ENCODE measurements at regions of chr2 and their contacts with region 1.

Region 1: GRCh38 chr2:70070541-70071268 is 16.6 kb upstream of the PCBP1 start:
- DNase-seq: peak in 34 of 35 experiments; percentile 24 to 87 (median 48)
- ATAC-seq: peak; percentile 49 to 80 (median 78)
- H3K4me3 ChIP-seq: peak overlapping the region; percentile 23 to 26
- H3K4me3 Mint-ChIP-seq: peak overlapping the region; percentile 56 to 72 (median 71)
- H3K27ac ChIP-seq: peak overlapping the region; percentile 95
- H3K27ac Mint-ChIP-seq: peak overlapping the region; percentile 95 to 97
- H3K4me1 ChIP-seq: peaks cover 24 to 45% of the 10 kb centered on the region in 2 experiments
- H3K4me1 Mint-ChIP-seq: peaks cover 44 to 61% (median 59%) of the 10 kb centered on the region in 3 donors
- H3K27me3 ChIP-seq: no peaks in the 10 kb centered on the region
- H3K27me3 Mint-ChIP-seq: no peaks in the 10 kb centered on the region

Region 2: GRCh38 chr2:69717861-69718273 is 352.8 kb before region 1 on chr2:
- CTCF ChIA-PET with region 1: no interaction called
- POLR2A ChIA-PET with region 1: interaction called in 1 of 2 experiments, 10 read pairs
- DNase-seq: no peak
- ATAC-seq: no peak
- H3K4me3 ChIP-seq: no peak overlapping the region
- H3K4me3 Mint-ChIP-seq: no peak overlapping the region
- H3K27ac ChIP-seq: no peak overlapping the region
- H3K27ac Mint-ChIP-seq: no peak overlapping the region
- H3K4me1 ChIP-seq: peaks cover 0 to 15% of the 10 kb centered on the region in 2 experiments
- H3K4me1 Mint-ChIP-seq: peaks cover 10 to 19% (median 14%) of the 10 kb centered on the region in 3 donors
- H3K27me3 ChIP-seq: no peaks in the 10 kb centered on the region
- H3K27me3 Mint-ChIP-seq: no peaks in the 10 kb centered on the region

Region 3: GRCh38 chr2:69848201-69848770 is 222.4 kb before region 1 on chr2:
- CTCF ChIA-PET with region 1: no interaction called
- POLR2A ChIA-PET with region 1: no interaction called
- DNase-seq: no peak
- ATAC-seq: no peak
- H3K4me3 ChIP-seq: no peak overlapping the region
- H3K4me3 Mint-ChIP-seq: no peak overlapping the region
- H3K27ac ChIP-seq: no peak overlapping the region
- H3K27ac Mint-ChIP-seq: no peak overlapping the region
- H3K4me1 ChIP-seq: no peaks in the 10 kb centered on the region
- H3K4me1 Mint-ChIP-seq: no peaks in the 10 kb centered on the region
- H3K27me3 ChIP-seq: no peaks in the 10 kb centered on the region
- H3K27me3 Mint-ChIP-seq: no peaks in the 10 kb centered on the region

Region 4: DNA sequence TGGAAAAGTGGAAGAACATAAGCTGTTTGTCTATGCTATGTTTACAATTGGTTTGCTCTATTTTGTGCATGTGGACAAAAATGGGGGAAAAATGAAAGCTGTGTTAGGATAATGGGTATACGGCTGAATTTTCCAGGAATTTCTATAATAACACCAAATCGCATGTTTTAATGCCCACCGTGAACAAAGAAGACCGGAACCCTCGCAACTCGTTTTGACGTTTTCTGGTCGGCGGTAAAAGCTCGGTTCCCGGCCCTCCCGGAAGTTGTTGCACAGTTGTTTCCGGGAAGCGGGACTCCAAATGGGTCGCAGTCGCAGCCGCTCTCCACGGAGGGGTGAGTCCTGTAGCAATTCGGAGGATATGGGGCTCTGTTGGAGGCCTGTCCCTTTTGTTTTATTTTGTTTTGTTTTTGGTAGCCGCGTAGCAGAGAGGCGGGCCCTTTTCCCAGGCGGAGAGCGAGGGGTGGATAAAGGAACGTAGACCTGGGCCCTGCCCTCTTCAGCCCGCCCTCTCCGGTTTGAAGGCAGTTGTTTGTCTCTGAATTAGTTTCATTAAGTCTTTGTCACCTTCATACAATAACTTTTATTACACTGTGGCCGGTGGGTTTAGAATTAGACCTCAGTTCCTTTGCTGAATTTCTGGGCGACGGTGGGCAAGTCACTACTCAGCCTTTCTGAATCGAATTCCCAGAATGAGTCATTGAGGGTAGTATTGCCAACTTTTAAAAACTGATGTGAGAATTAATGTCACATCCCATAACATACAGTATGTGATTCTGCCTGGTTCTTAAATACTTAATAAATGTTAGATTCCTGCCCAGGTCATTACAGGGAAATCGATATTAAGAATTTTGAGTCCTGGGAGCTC is 176.8 kb before region 1 on chr2 and contains the start of gene SNRNP27:
- CTCF ChIA-PET with region 1: interaction called in 1 of 2 experiments, 6 read pairs
- POLR2A ChIA-PET with region 1: interaction called in 1 of 2 experiments, 20 read pairs
- DNase-seq: peak; percentile 65 to 87 (median 79)
- ATAC-seq: peak; percentile 93 to 96 (median 94)
- H3K4me3 ChIP-seq: peak within 1 kb of the TSS; percentile 73 to 93
- H3K4me3 Mint-ChIP-seq: peak within 1 kb of the TSS; percentile 86 to 100 (median 99)
- H3K27ac ChIP-seq: peak within 1 kb of the TSS; percentile 65
- H3K27ac Mint-ChIP-seq: peak within 1 kb of the TSS; percentile 97 to 99
- H3K4me1 ChIP-seq: peaks cover 13 to 19% of the 10 kb centered on the region in 2 experiments
- H3K4me1 Mint-ChIP-seq: peaks cover 45 to 50% (median 46%) of the 10 kb centered on the region in 3 donors
- H3K27me3 ChIP-seq: no peaks in the 10 kb centered on the region
- H3K27me3 Mint-ChIP-seq: no peaks in the 10 kb centered on the region
- total RNA-seq, gene SNRNP27: 38.3 to 51.1 (median 42.0) TPM

Region 5: GRCh38 chr2:69997015-69997830 is 73.5 kb before region 1 on chr2:
- CTCF ChIA-PET with region 1: interaction called in 1 of 2 experiments, 10 read pairs
- POLR2A ChIA-PET with region 1: interaction called in 1 of 2 experiments, 5 read pairs
- DNase-seq: peak in 1 of 35 experiments; percentile 14
- ATAC-seq: peak in 1 of 4 experiments; percentile 31
- H3K4me3 ChIP-seq: no peak overlapping the region
- H3K4me3 Mint-ChIP-seq: no peak overlapping the region
- H3K27ac ChIP-seq: no peak overlapping the region
- H3K27ac Mint-ChIP-seq: no peak overlapping the region
- H3K4me1 ChIP-seq: peaks cover 0 to 3% of the 10 kb centered on the region in 2 experiments
- H3K4me1 Mint-ChIP-seq: peaks cover 3 to 6% (median 5%) of the 10 kb centered on the region in 3 donors
- H3K27me3 ChIP-seq: no peaks in the 10 kb centered on the region
- H3K27me3 Mint-ChIP-seq: no peaks in the 10 kb centered on the region

Region 6: GRCh38 chr2:70124983-70125480 is 54.3 kb after region 1 on chr2:
- CTCF ChIA-PET with region 1: interaction called, 7 to 20 read pairs
- POLR2A ChIA-PET with region 1: interaction called in 1 of 2 experiments, 5 read pairs
- DNase-seq: peak; percentile 40 to 78 (median 60)
- ATAC-seq: peak; percentile 63 to 69 (median 66)
- H3K4me3 ChIP-seq: peak overlapping the region; percentile 44 to 78
- H3K4me3 Mint-ChIP-seq: peak overlapping the region; percentile 90 to 98 (median 95)
- H3K27ac ChIP-seq: peak overlapping the region; percentile 98
- H3K27ac Mint-ChIP-seq: peak overlapping the region; percentile 100
- H3K4me1 ChIP-seq: peaks cover 38 to 67% of the 10 kb centered on the region in 2 experiments
- H3K4me1 Mint-ChIP-seq: peaks cover 71 to 84% (median 81%) of the 10 kb centered on the region in 3 donors
- H3K27me3 ChIP-seq: no peaks in the 10 kb centered on the region
- H3K27me3 Mint-ChIP-seq: no peaks in the 10 kb centered on the region

Region 7: DNA sequence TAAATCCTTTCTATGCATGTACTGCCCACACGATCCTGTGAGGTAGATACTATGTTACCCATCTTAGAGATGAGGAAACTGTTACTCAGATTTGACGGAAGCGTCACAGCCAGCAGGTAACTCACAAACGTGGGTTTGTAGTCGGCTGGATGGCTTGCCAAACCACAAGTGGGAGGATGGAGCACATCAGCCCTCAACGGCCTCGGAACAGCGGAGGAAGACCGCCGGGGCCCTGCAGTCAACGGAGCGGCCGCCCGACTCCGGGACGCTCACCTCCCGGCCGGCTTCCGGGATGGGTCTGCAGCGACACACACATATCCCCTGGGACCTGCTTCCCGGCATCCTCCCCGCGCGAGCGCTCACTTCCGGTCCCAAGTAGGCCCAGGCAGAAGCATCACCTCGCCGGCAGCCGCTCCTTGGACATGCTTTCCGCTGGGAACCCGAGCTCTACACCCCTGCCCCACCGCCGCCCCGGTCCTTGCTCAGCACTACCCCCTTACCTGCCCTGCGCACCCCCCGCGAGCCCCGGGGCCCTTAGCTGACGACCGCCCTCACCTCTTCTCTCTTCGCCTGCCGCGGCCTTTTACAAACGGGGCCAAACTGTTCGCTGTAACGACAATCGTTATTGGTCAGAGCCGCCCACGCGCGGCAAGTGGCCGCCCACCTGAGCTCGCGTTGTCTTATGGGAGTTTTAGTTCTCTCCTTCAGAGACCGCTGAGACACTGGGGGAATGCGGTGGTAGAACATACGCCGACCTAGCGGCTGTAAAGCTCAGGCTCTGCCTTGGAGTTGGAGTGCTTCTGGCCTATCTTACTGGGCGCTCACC is 119.9 kb after region 1 on chr2 and contains the start of gene C2orf42:
- CTCF ChIA-PET with region 1: interaction called in 1 of 2 experiments, 11 read pairs
- POLR2A ChIA-PET with region 1: interaction called, 5 to 8 read pairs
- DNase-seq: peak; percentile 88 to 97 (median 94)
- ATAC-seq: peak; percentile 85 to 91 (median 88)
- H3K4me3 ChIP-seq: peak within 1 kb of the TSS; percentile 73
- H3K4me3 Mint-ChIP-seq: peak within 1 kb of the TSS; percentile 88 to 97 (median 91)
- H3K27ac ChIP-seq: peak within 1 kb of the TSS; percentile 95
- H3K27ac Mint-ChIP-seq: peak within 1 kb of the TSS; percentile 98 to 99
- H3K4me1 ChIP-seq: peaks cover 7 to 8% of the 10 kb centered on the region in 2 experiments
- H3K4me1 Mint-ChIP-seq: peaks cover 17 to 24% (median 22%) of the 10 kb centered on the region in 3 donors
- H3K27me3 ChIP-seq: no peaks in the 10 kb centered on the region
- H3K27me3 Mint-ChIP-seq: no peaks in the 10 kb centered on the region
- total RNA-seq, gene C2orf42: 23.3 to 45.9 (median 39.1) TPM

Measured in T-cell (primary cell).